GM12878 (cell line): ENCODE measurements at regions of chr3 and their contacts with region 1.

Region 1: DNA sequence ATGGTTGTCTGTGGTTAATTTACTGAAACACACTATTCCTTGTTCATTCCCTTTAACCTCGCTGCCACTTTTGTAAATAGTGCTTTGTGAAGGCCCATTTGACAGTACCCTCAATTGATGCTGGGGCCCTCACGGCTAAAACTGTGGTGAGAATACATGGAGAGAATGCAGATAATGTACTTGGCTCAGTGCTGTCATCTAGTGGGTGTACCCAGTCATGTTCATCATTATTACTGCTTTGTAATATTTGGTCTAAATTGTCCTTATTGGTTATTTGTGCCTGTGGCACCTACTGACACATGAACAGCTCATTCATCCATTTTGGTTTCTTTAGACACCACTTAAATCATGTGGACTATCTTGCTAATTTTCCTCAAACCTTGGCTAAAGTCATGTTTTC is 543.6 kb downstream of the EDEM1 start:
- DNase-seq: no peak
- ATAC-seq: peak; percentile 55
- H3K4me3 ChIP-seq: no peak overlapping the region
- H3K27ac ChIP-seq: no peak overlapping the region
- H3K4me1 ChIP-seq: no peaks in the 10 kb centered on the region
- H3K27me3 ChIP-seq: no peaks in the 10 kb centered on the region
- CTCF ChIP-seq: peak; percentile 40 to 46 (median 44); a peak in 5 of 6 replicates
- EP300 ChIP-seq: no peak
- POLR2A ChIP-seq: no peak
- RAD21 ChIP-seq: peak; percentile 69

Region 2: GRCh38 chr3:5226783-5227182 is 504.3 kb before region 1 on chr3:
- CTCF ChIA-PET with region 1: interaction called, 7 read pairs
- POLR2A ChIA-PET with region 1: no interaction called
- RAD21 ChIA-PET with region 1: no interaction called
- SMC1A ChIA-PET with region 1: interaction called, 3 read pairs
- in situ Hi-C with region 1: no loop called
- intact Hi-C with region 1: loop called (anchors 10 kb)
- DNase-seq: no peak
- ATAC-seq: peak; percentile 26
- H3K4me3 ChIP-seq: no peak overlapping the region
- H3K27ac ChIP-seq: no peak overlapping the region
- H3K4me1 ChIP-seq: no peaks in the 10 kb centered on the region
- H3K27me3 ChIP-seq: no peaks in the 10 kb centered on the region
- CTCF ChIP-seq: peak; percentile 37 to 60 (median 45); a peak in 5 of 6 replicates
- EP300 ChIP-seq: no peak
- POLR2A ChIP-seq: no peak
- RAD21 ChIP-seq: peak; percentile 88

Region 3: DNA sequence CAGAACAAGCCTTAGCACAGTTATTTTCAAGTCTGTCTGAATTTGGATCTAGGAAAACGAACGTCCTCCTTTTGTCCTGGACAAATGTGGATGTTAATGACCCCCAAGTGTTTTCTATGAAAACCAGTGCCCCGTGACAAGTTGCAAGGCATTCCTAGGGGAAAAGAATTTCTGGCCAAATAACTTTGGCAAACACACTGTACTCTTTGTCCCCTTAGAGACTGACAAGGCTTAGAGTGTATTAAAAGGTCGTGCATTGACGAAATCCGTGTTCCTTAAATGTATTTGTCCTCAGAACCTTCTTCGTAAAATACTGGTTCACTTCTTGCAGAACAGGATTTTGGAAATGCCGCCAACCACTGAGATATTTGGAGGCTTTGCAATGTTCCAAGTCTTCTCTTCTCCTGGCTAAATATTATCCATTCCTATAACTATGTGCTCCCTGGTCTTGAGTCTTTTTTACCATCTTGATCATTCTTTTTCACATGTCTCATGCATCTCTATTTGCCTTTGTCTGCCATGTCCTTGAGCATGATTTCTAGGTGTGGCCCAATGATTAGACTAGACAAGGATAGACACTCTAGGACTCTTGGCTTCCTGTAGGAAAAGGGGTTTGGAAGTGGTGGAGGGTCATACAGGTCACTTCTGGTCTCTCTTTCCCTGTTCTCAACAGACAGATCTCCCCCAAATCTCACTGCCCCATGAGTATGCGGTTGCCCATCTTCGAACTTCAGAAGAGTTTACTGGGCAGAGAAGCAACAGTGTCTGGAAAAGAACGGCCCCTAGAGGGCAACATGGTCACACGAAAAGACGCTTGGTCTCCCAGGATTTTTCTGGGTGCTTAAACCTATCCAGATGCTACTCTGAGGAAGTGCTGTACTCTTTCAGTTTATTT is 426.1 kb before region 1 on chr3:
- CTCF ChIA-PET with region 1: no interaction called
- POLR2A ChIA-PET with region 1: no interaction called
- RAD21 ChIA-PET with region 1: no interaction called
- SMC1A ChIA-PET with region 1: no interaction called
- in situ Hi-C with region 1: no loop called
- intact Hi-C with region 1: loop called (anchors 1 kb)
- DNase-seq: no peak
- ATAC-seq: peak; percentile 95
- H3K4me3 ChIP-seq: no peak overlapping the region
- H3K27ac ChIP-seq: no peak overlapping the region
- H3K4me1 ChIP-seq: no peaks in the 10 kb centered on the region
- H3K27me3 ChIP-seq: no peaks in the 10 kb centered on the region
- CTCF ChIP-seq: peak; percentile 68 to 78 (median 75)
- EP300 ChIP-seq: no peak
- POLR2A ChIP-seq: no peak
- RAD21 ChIP-seq: peak; percentile 85

Region 4: GRCh38 chr3:5568458-5568857 is 162.6 kb before region 1 on chr3:
- CTCF ChIA-PET with region 1: interaction called, 17 read pairs
- POLR2A ChIA-PET with region 1: no interaction called
- RAD21 ChIA-PET with region 1: interaction called, 6 read pairs
- SMC1A ChIA-PET with region 1: interaction called, 3 read pairs
- in situ Hi-C with region 1: no loop called
- intact Hi-C with region 1: no loop called
- DNase-seq: no peak
- ATAC-seq: no peak
- H3K4me3 ChIP-seq: no peak overlapping the region
- H3K27ac ChIP-seq: no peak overlapping the region
- H3K4me1 ChIP-seq: no peaks in the 10 kb centered on the region
- H3K27me3 ChIP-seq: no peaks in the 10 kb centered on the region
- CTCF ChIP-seq: peak; percentile 1 to 35 (median 34); a peak in 4 of 6 replicates
- EP300 ChIP-seq: no peak
- POLR2A ChIP-seq: no peak
- RAD21 ChIP-seq: peak; percentile 53

Region 5: GRCh38 chr3:5699313-5699712 is 31.8 kb before region 1 on chr3:
- CTCF ChIA-PET with region 1: no interaction called
- POLR2A ChIA-PET with region 1: no interaction called
- RAD21 ChIA-PET with region 1: no interaction called
- SMC1A ChIA-PET with region 1: no interaction called
- in situ Hi-C with region 1: no loop called
- intact Hi-C with region 1: no loop called
- DNase-seq: no peak
- ATAC-seq: no peak
- H3K4me3 ChIP-seq: no peak overlapping the region
- H3K27ac ChIP-seq: no peak overlapping the region
- H3K4me1 ChIP-seq: no peaks in the 10 kb centered on the region
- H3K27me3 ChIP-seq: no peaks in the 10 kb centered on the region
- CTCF ChIP-seq: no peak
- EP300 ChIP-seq: no peak
- POLR2A ChIP-seq: no peak
- RAD21 ChIP-seq: no peak

Region 6: DNA sequence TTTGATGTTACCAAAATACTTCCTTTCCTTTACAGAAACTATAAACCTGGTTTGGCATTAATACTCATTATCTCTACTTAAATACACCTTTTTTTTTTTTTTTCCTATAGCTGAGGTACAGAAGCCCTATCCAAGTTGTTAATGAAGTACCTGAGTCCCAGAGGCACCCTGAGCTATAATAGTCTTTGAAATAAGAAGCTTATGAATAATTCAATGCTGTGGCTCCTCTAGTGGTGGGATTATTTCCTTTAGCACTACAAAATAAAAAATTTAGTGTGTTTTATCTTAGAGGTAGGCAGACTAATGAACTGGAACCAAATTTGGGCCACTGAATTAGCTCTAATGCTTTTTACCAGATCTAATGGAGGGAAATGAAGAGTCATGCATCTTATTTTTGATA is 68.3 kb after region 1 on chr3:
- CTCF ChIA-PET with region 1: no interaction called
- POLR2A ChIA-PET with region 1: no interaction called
- RAD21 ChIA-PET with region 1: no interaction called
- SMC1A ChIA-PET with region 1: no interaction called
- in situ Hi-C with region 1: no loop called
- intact Hi-C with region 1: no loop called
- DNase-seq: no peak
- ATAC-seq: no peak
- H3K4me3 ChIP-seq: no peak overlapping the region
- H3K27ac ChIP-seq: no peak overlapping the region
- H3K4me1 ChIP-seq: no peaks in the 10 kb centered on the region
- H3K27me3 ChIP-seq: no peaks in the 10 kb centered on the region
- CTCF ChIP-seq: 0 out of 6 replicates have a peak, but pooled peaks of 1 of the 3 experiments have one; percentile 4
- EP300 ChIP-seq: no peak
- POLR2A ChIP-seq: no peak
- RAD21 ChIP-seq: no peak